ENCODE measurements at regions of chr2 and their contacts with region 1.

Region 1: DNA sequence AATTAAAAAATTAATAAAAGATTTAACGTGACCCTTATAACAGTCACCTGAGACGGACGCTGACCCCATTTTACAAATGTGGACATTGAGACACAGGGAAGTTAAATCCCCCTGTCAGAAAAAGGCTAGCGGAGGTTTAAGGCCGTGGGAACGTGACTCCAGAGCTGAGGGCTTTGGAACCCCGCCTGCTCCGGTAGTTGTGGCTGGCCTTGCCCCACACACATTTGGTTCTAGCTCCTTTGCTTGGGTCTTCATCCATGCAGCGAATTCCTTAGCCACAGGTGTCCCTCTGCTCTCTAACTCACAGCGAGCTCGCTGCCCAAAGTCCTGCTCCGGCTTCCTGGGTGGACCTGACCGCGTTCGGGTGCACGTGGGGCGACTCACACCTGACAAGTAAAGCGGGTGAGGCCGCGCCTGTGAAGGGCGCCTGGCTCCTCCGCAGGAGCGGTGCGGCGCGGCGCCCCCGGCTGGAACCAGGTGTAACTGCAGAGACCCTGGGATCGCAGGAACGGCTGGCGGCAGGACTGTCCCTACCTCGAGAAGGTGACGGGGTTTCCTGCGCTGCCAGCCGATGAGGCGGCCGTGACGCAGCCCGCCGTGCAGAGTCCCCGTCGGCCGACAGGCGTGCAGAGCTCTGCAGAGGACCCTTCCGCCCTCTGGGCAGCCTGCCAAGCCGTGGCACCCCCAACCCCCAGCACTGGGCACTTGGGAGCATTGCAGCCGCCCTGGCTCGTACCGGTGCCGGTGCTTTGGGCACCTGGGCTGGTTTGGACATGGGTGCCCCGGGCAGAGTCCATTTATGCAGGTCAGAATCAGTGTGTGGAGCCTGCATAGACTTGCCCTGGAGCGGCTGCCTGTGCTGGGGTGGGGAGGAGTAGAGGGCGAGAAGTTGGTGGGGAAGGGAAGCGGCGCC is 2.4 kb upstream of the PROC start:
- DNase-seq: peak; percentile 74 to 89 (median 79)
- H3K4me3 ChIP-seq: peak overlapping the region; percentile 28 to 74 (median 51)
- H3K4me3 Mint-ChIP-seq: peak overlapping the region; percentile 77 to 88
- H3K27ac ChIP-seq: peak overlapping the region in 1 of 2 donors; percentile 45
- H3K27ac Mint-ChIP-seq: peak overlapping the region; percentile 23 to 80 (median 70)
- H3K4me1 ChIP-seq: peaks cover 49 to 62% of the 10 kb centered on the region in 2 donors
- H3K4me1 Mint-ChIP-seq: peaks cover 55% of the 10 kb centered on the region
- H3K27me3 ChIP-seq: peaks cover 0 to 4% of the 10 kb centered on the region in 2 donors
- H3K27me3 Mint-ChIP-seq: peaks cover 6 to 24% (median 24%) of the 10 kb centered on the region in 3 donors
- CTCF ChIP-seq: peak; percentile 80

Region 2: GRCh38 chr2:127064642-127065250 is 351.1 kb before region 1 on chr2:
- intact Hi-C with region 1: loop called in 1 of 2 experiments (anchors 10 kb)
- DNase-seq: peak; percentile 99
- H3K4me3 ChIP-seq: peak overlapping the region in 1 of 3 experiments; percentile 25
- H3K4me3 Mint-ChIP-seq: peak overlapping the region; percentile 34 to 72
- H3K27ac ChIP-seq: peak overlapping the region; percentile 76 to 83
- H3K27ac Mint-ChIP-seq: peak overlapping the region; percentile 83 to 94 (median 91)
- H3K4me1 ChIP-seq: peaks cover 47 to 52% of the 10 kb centered on the region in 2 donors
- H3K4me1 Mint-ChIP-seq: peaks cover 52% of the 10 kb centered on the region
- H3K27me3 ChIP-seq: no peaks in the 10 kb centered on the region
- H3K27me3 Mint-ChIP-seq: peaks cover 2 to 8% (median 3%) of the 10 kb centered on the region in 3 donors
- CTCF ChIP-seq: peak; percentile 28

Region 3: GRCh38 chr2:127305990-127306585 is 109.8 kb before region 1 on chr2:
- intact Hi-C with region 1: no loop called
- DNase-seq: peak; percentile 50 to 73 (median 64)
- H3K4me3 ChIP-seq: no peak overlapping the region
- H3K4me3 Mint-ChIP-seq: no peak overlapping the region
- H3K27ac ChIP-seq: peak overlapping the region in 1 of 2 donors; percentile 60
- H3K27ac Mint-ChIP-seq: peak overlapping the region; percentile 65 to 85 (median 81)
- H3K4me1 ChIP-seq: peaks cover 5 to 9% of the 10 kb centered on the region in 2 donors
- H3K4me1 Mint-ChIP-seq: peaks cover 11% of the 10 kb centered on the region
- H3K27me3 ChIP-seq: no peaks in the 10 kb centered on the region
- H3K27me3 Mint-ChIP-seq: peaks cover 0 to 2% (median 0%) of the 10 kb centered on the region in 3 donors
- CTCF ChIP-seq: no peak

Region 4: GRCh38 chr2:127355386-127356008 is 60.4 kb before region 1 on chr2:
- intact Hi-C with region 1: loop called in 1 of 2 experiments (anchors 2 kb)
- DNase-seq: peak in 2 of 3 donors; percentile 34 to 37
- H3K4me3 ChIP-seq: no peak overlapping the region
- H3K4me3 Mint-ChIP-seq: no peak overlapping the region
- H3K27ac ChIP-seq: peak overlapping the region in 1 of 2 donors; percentile 20
- H3K27ac Mint-ChIP-seq: peak overlapping the region in 1 of 7 donors; percentile 32
- H3K4me1 ChIP-seq: peaks cover 11 to 23% of the 10 kb centered on the region in 2 donors
- H3K4me1 Mint-ChIP-seq: peaks cover 41% of the 10 kb centered on the region
- H3K27me3 ChIP-seq: no peaks in the 10 kb centered on the region
- H3K27me3 Mint-ChIP-seq: no peaks in the 10 kb centered on the region
- CTCF ChIP-seq: peak; percentile 67

Region 5: DNA sequence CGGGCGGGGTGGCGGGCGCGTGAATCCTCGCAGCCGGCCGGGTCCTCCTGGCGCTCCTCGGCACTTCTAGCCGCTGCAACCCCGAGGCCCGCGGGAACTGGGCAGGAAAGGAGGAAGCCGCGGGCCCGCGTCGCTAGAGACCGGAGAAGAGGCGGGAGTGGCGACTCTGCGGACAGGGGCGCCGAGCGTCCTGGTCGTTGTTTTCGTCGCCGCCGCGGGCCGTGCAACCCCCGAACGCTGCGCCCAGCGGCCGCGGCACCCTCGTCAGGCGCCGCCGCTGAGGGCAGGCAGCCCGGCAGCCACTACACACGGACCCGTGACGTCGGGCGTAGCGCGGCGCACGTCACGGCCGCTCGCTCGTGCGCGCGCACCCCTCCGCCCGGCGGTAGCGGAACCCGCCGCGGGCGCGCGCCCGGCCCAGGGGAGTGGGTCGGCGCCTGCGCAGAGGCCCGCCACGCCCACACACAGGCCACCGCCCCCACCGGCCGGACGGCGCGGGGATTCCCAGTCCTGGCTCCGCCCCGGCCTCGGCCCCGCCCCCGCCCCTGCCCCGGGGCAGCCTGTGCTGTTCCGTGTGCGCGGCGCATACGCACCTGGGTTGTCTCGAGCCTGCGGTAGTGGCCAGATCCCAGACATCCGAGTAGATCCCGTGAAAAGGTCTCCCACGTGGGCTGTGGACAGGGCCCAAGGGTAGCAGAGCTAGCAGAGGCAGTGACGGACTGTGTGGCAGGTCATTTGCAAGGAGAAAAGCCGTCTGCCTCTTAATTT is 28.0 kb before region 1 on chr2 and contains the start of gene MAP3K2:
- intact Hi-C with region 1: loop called (anchors 1 to 2 kb)
- DNase-seq: peak; percentile 89 to 94 (median 94)
- H3K4me3 ChIP-seq: peak within 1 kb of the TSS; percentile 53 to 97 (median 87)
- H3K4me3 Mint-ChIP-seq: peak within 1 kb of the TSS; percentile 90 to 94
- H3K27ac ChIP-seq: peak within 1 kb of the TSS; percentile 98 to 99
- H3K27ac Mint-ChIP-seq: peak within 1 kb of the TSS; percentile 98 to 100 (median 99)
- H3K4me1 ChIP-seq: peaks cover 44 to 53% of the 10 kb centered on the region in 2 donors
- H3K4me1 Mint-ChIP-seq: peaks cover 55% of the 10 kb centered on the region
- H3K27me3 ChIP-seq: no peaks in the 10 kb centered on the region
- H3K27me3 Mint-ChIP-seq: peaks cover 0 to 2% (median 0%) of the 10 kb centered on the region in 3 donors
- CTCF ChIP-seq: no peak
- polyA plus RNA-seq, gene MAP3K2: 16.0 to 86.4 (median 66.3) TPM

Region 6: GRCh38 chr2:127398239-127398590 is 17.6 kb before region 1 on chr2:
- intact Hi-C with region 1: no loop called
- DNase-seq: peak; percentile 87 to 97 (median 90)
- H3K4me3 ChIP-seq: no peak overlapping the region
- H3K4me3 Mint-ChIP-seq: peak overlapping the region in 1 of 2 donors; percentile 73
- H3K27ac ChIP-seq: peak overlapping the region; percentile 29 to 47
- H3K27ac Mint-ChIP-seq: peak overlapping the region; percentile 75 to 97 (median 91)
- H3K4me1 ChIP-seq: peaks cover 10 to 14% of the 10 kb centered on the region in 2 donors
- H3K4me1 Mint-ChIP-seq: peaks cover 18% of the 10 kb centered on the region
- H3K27me3 ChIP-seq: no peaks in the 10 kb centered on the region
- H3K27me3 Mint-ChIP-seq: peaks cover 0 to 1% (median 0%) of the 10 kb centered on the region in 3 donors
- CTCF ChIP-seq: no peak

Measured in CD14-positive monocyte (primary cell).